Ovary (tissue), 10 donors: ENCODE measurements at regions of chr10 and their contacts with region 1.

Region 1: GRCh38 chr10:46024948-46025347 is 5.5 kb downstream of the NCOA4 start:
- DNase-seq: no peak
- H3K4me3 ChIP-seq: no peak overlapping the region
- H3K27ac ChIP-seq: no peak overlapping the region
- H3K4me1 ChIP-seq: peaks cover 20% of the 10 kb centered on the region
- H3K27me3 ChIP-seq: no peaks in the 10 kb centered on the region
- CTCF ChIP-seq: no peak
- EP300 ChIP-seq: no peak
- POLR2A ChIP-seq: no peak

Region 2: DNA sequence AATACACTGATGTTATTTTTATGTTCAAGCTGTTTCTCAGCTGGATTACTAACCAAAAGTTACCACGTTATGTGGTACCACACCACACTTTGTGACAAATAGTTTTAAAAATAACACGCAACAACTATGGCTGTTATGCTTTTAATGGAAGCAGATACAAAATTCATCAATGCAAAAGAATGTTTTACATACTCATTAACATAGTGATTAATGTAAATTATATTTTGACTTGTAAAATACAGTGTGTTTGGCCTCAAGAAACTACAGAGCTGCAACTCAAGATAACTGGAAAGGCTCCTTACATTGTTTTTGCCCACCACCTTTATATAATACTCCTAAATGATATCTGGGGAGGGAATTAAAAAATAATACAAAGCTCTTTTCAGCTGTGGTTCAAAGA is 20.0 kb before region 1 on chr10:
- intact Hi-C with region 1: loop called in 1 of 4 experiments (anchors 2 kb)
- DNase-seq: no peak
- H3K4me3 ChIP-seq: no peak overlapping the region
- H3K27ac ChIP-seq: no peak overlapping the region
- H3K4me1 ChIP-seq: no peaks in the 10 kb centered on the region
- H3K27me3 ChIP-seq: no peaks in the 10 kb centered on the region
- CTCF ChIP-seq: no peak
- EP300 ChIP-seq: no peak
- POLR2A ChIP-seq: no peak